CD8-positive, alpha-beta T cell (primary cell): ENCODE measurements at regions of chr3 and their contacts with region 1.

Region 1: GRCh38 chr3:143119009-143119914 is at the start of gene CHST2:
- DNase-seq: peak; percentile 28 to 85 (median 66)
- ATAC-seq: peak; percentile 74
- H3K4me3 ChIP-seq: peak within 1 kb of the TSS; percentile 88 to 90
- H3K4me3 Mint-ChIP-seq: peak within 1 kb of the TSS; percentile 88
- H3K27ac ChIP-seq: peak within 1 kb of the TSS; percentile 54 to 56
- H3K27ac Mint-ChIP-seq: peak within 1 kb of the TSS; percentile 75
- H3K4me1 ChIP-seq: peaks cover 37% of the 10 kb centered on the region
- H3K4me1 Mint-ChIP-seq: peaks cover 32% of the 10 kb centered on the region
- H3K27me3 ChIP-seq: no peaks in the 10 kb centered on the region
- H3K27me3 Mint-ChIP-seq: no peaks in the 10 kb centered on the region
- CTCF ChIP-seq: no peak
- total RNA-seq, gene CHST2: 2.5 to 2.7 TPM

Region 2: DNA sequence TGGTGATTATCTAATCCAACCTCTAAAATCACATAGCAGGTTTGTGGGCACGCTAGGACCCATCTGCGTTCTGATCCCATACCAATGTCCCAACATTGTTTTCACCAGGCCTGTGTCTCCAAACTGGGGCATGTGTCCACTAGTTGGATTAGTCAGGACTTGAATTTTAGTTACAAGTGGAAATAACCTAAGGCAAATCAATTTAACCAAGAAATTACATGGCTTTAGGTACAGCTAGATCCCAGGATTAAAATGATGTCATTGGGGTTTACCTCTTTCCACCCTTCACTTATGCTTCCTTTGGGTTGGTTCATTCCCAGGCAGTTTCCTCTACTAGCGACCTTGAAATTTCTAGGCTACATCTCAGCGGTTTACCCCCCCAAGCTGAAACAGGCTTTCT is 1934.8 kb before region 1 on chr3:
- CTCF ChIA-PET with region 1: no interaction called
- POLR2A ChIA-PET with region 1: no interaction called
- intact Hi-C with region 1: no loop called
- DNase-seq: no peak
- ATAC-seq: no peak
- H3K4me3 ChIP-seq: no peak overlapping the region
- H3K4me3 Mint-ChIP-seq: no peak overlapping the region
- H3K27ac ChIP-seq: no peak overlapping the region
- H3K27ac Mint-ChIP-seq: no peak overlapping the region
- H3K4me1 ChIP-seq: no peaks in the 10 kb centered on the region
- H3K4me1 Mint-ChIP-seq: no peaks in the 10 kb centered on the region
- H3K27me3 ChIP-seq: no peaks in the 10 kb centered on the region
- H3K27me3 Mint-ChIP-seq: no peaks in the 10 kb centered on the region
- CTCF ChIP-seq: no peak

Region 3: DNA sequence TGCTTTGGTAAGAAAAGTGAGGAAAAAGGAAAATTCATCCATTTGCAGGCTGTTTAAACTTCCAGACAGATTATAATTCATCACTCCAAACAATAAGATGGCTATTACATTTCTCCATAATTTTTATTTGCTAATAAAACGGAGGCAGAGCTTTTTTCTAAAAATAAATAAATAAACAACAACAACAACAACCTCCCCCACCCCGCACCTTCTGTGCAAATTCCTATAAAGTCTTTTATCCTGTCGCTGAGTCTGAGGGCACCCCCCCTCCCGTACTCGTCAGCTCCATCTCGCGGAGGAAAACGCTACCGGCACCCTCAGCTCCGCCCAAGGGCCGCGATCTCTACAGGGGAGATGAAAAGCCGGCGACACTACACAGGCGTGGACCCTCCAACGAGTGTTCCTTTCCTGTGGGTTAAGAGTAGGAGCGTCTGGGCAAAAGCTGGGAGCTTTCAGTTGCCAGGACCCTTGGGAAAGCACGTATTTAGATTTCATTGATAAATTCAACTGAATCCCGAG is 1243.8 kb before region 1 on chr3:
- CTCF ChIA-PET with region 1: no interaction called
- POLR2A ChIA-PET with region 1: no interaction called
- intact Hi-C with region 1: loop called in 1 of 2 experiments (anchors 5 kb)
- DNase-seq: peak; percentile 67 to 92 (median 84)
- ATAC-seq: peak; percentile 67
- H3K4me3 ChIP-seq: peak overlapping the region; percentile 71 to 88
- H3K4me3 Mint-ChIP-seq: peak overlapping the region; percentile 88
- H3K27ac ChIP-seq: peak overlapping the region; percentile 76 to 99
- H3K27ac Mint-ChIP-seq: peak overlapping the region; percentile 90
- H3K4me1 ChIP-seq: peaks cover 17% of the 10 kb centered on the region
- H3K4me1 Mint-ChIP-seq: peaks cover 29% of the 10 kb centered on the region
- H3K27me3 ChIP-seq: no peaks in the 10 kb centered on the region
- H3K27me3 Mint-ChIP-seq: no peaks in the 10 kb centered on the region
- CTCF ChIP-seq: peak; percentile 82

Region 4: DNA sequence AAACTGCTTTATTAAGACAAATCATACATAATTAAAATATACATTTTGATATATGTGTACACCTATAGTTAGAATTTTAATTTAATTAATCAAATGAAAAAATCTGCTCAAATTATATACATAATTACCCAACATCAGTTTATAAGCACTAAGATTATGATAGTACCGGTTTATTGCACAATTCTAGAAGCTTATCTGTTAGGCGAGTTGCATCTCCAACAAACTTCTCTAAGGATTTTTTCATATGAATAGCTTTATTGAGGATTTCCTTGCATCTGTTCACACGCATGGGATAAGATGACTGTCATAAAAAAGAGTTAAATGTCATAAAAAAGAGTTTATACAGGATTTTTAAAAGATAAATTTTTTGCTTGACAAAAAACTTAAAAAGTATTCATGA is 651.5 kb before region 1 on chr3:
- CTCF ChIA-PET with region 1: no interaction called
- POLR2A ChIA-PET with region 1: no interaction called
- intact Hi-C with region 1: no loop called
- DNase-seq: no peak
- ATAC-seq: no peak
- H3K4me3 ChIP-seq: no peak overlapping the region
- H3K4me3 Mint-ChIP-seq: no peak overlapping the region
- H3K27ac ChIP-seq: no peak overlapping the region
- H3K27ac Mint-ChIP-seq: no peak overlapping the region
- H3K4me1 ChIP-seq: no peaks in the 10 kb centered on the region
- H3K4me1 Mint-ChIP-seq: no peaks in the 10 kb centered on the region
- H3K27me3 ChIP-seq: no peaks in the 10 kb centered on the region
- H3K27me3 Mint-ChIP-seq: no peaks in the 10 kb centered on the region
- CTCF ChIP-seq: no peak

Region 5: GRCh38 chr3:142595951-142596725 is 523.1 kb before region 1 on chr3 and contains the start of gene PLS1:
- CTCF ChIA-PET with region 1: no interaction called
- POLR2A ChIA-PET with region 1: no interaction called
- intact Hi-C with region 1: loop called in 1 of 2 experiments (anchors 2 kb)
- DNase-seq: peak; percentile 74 to 91 (median 83)
- ATAC-seq: peak; percentile 87
- H3K4me3 ChIP-seq: peak within 1 kb of the TSS; percentile 75 to 84
- H3K4me3 Mint-ChIP-seq: peak within 1 kb of the TSS; percentile 96
- H3K27ac ChIP-seq: peak within 1 kb of the TSS; percentile 28 to 34
- H3K27ac Mint-ChIP-seq: peak within 1 kb of the TSS; percentile 89
- H3K4me1 ChIP-seq: peaks cover 17% of the 10 kb centered on the region
- H3K4me1 Mint-ChIP-seq: peaks cover 17% of the 10 kb centered on the region
- H3K27me3 ChIP-seq: no peaks in the 10 kb centered on the region
- H3K27me3 Mint-ChIP-seq: peaks cover 11% of the 10 kb centered on the region
- CTCF ChIP-seq: no peak
- total RNA-seq, gene PLS1: 0.57 to 2.0 TPM

Region 6: DNA sequence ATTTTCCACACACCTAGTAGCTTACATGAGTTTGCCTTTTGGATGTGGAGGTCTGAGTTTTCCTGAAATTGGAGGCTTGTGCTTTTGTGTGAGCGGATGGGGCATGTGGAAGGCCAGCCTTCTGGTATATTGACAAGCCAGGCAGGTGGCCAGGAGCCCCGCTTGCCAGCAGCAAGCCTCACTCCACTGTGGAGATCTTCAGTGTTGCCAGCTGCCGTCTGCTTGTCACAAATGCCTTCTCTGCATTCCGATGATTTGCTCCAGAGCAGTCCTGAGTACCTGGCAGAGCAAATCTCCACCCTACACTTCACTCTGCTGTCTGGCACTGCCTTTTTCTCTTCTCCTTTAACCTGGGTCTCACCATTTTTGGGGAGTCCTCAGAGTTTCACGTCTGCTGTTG is 28.8 kb before region 1 on chr3:
- CTCF ChIA-PET with region 1: no interaction called
- POLR2A ChIA-PET with region 1: no interaction called
- intact Hi-C with region 1: no loop called
- DNase-seq: no peak
- ATAC-seq: no peak
- H3K4me3 ChIP-seq: no peak overlapping the region
- H3K4me3 Mint-ChIP-seq: no peak overlapping the region
- H3K27ac ChIP-seq: no peak overlapping the region
- H3K27ac Mint-ChIP-seq: no peak overlapping the region
- H3K4me1 ChIP-seq: no peaks in the 10 kb centered on the region
- H3K4me1 Mint-ChIP-seq: no peaks in the 10 kb centered on the region
- H3K27me3 ChIP-seq: no peaks in the 10 kb centered on the region
- H3K27me3 Mint-ChIP-seq: no peaks in the 10 kb centered on the region
- CTCF ChIP-seq: no peak

Region 7: DNA sequence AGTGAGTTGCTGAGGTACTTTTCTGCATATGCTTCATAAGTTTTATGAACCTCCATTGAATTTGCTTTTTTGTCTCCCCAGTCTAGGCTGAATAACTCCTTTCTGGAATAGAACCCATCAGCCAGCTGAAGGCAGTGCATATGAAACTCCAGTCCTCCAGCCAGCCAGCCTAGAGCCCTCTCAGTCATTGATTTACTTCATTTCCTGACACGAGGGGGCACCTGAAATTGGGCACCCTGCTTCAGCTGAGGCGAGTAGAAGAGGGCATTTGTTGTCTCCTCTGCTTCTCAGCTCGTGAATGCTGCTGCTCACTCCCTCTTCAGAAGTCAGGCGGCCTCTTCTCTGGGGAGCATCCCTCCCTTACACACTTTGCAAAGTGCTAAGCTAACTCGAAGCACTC is 32.8 kb after region 1 on chr3:
- CTCF ChIA-PET with region 1: interaction called, 3 read pairs
- POLR2A ChIA-PET with region 1: no interaction called
- intact Hi-C with region 1: loop called in 1 of 2 experiments (anchors 2 kb)
- DNase-seq: peak in 3 of 9 experiments; percentile 10 to 34 (median 25)
- ATAC-seq: peak; percentile 48
- H3K4me3 ChIP-seq: no peak overlapping the region
- H3K4me3 Mint-ChIP-seq: no peak overlapping the region
- H3K27ac ChIP-seq: no peak overlapping the region
- H3K27ac Mint-ChIP-seq: no peak overlapping the region
- H3K4me1 ChIP-seq: peaks cover 12% of the 10 kb centered on the region
- H3K4me1 Mint-ChIP-seq: peaks cover 29% of the 10 kb centered on the region
- H3K27me3 ChIP-seq: no peaks in the 10 kb centered on the region
- H3K27me3 Mint-ChIP-seq: no peaks in the 10 kb centered on the region
- CTCF ChIP-seq: no peak

Region 8: DNA sequence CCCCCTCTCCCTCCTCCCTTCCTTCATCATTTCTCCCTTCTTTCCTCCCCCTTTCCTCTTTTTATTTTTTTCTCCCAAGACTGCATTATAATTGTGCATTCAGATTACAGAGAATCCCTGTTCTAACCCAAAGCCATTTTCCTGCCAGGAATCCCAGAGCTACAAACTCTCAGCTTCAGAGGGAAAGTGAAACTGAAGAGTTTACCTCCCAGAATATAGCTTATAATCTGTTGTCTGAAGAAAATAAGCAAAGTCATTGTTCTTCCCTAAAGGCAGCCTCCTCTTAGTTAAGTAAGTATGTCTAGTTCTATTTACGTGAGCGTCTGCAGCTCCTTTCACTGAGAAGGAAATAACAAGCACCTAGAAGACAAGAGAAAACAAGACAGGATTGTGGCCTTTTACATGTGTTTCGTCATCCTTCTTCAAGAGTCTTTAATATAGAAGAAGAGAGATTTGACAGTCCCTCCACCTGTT is 97.5 kb after region 1 on chr3:
- CTCF ChIA-PET with region 1: no interaction called
- POLR2A ChIA-PET with region 1: no interaction called
- intact Hi-C with region 1: no loop called
- DNase-seq: peak in 1 of 9 experiments; percentile 31
- ATAC-seq: peak; percentile 90
- H3K4me3 ChIP-seq: no peak overlapping the region
- H3K4me3 Mint-ChIP-seq: peak overlapping the region; percentile 79
- H3K27ac ChIP-seq: no peak overlapping the region
- H3K27ac Mint-ChIP-seq: peak overlapping the region; percentile 89
- H3K4me1 ChIP-seq: peaks cover 7% of the 10 kb centered on the region
- H3K4me1 Mint-ChIP-seq: peaks cover 24% of the 10 kb centered on the region
- H3K27me3 ChIP-seq: no peaks in the 10 kb centered on the region
- H3K27me3 Mint-ChIP-seq: no peaks in the 10 kb centered on the region
- CTCF ChIP-seq: no peak

Region 9: GRCh38 chr3:143302638-143303171 is 183.4 kb after region 1 on chr3:
- CTCF ChIA-PET with region 1: interaction called, 4 read pairs
- POLR2A ChIA-PET with region 1: no interaction called
- intact Hi-C with region 1: loop called in 1 of 2 experiments (anchors 2 kb)
- DNase-seq: no peak
- ATAC-seq: no peak
- H3K4me3 ChIP-seq: no peak overlapping the region
- H3K4me3 Mint-ChIP-seq: no peak overlapping the region
- H3K27ac ChIP-seq: no peak overlapping the region
- H3K27ac Mint-ChIP-seq: no peak overlapping the region
- H3K4me1 ChIP-seq: no peaks in the 10 kb centered on the region
- H3K4me1 Mint-ChIP-seq: peaks cover 13% of the 10 kb centered on the region
- H3K27me3 ChIP-seq: no peaks in the 10 kb centered on the region
- H3K27me3 Mint-ChIP-seq: no peaks in the 10 kb centered on the region
- CTCF ChIP-seq: no peak

Region 10: DNA sequence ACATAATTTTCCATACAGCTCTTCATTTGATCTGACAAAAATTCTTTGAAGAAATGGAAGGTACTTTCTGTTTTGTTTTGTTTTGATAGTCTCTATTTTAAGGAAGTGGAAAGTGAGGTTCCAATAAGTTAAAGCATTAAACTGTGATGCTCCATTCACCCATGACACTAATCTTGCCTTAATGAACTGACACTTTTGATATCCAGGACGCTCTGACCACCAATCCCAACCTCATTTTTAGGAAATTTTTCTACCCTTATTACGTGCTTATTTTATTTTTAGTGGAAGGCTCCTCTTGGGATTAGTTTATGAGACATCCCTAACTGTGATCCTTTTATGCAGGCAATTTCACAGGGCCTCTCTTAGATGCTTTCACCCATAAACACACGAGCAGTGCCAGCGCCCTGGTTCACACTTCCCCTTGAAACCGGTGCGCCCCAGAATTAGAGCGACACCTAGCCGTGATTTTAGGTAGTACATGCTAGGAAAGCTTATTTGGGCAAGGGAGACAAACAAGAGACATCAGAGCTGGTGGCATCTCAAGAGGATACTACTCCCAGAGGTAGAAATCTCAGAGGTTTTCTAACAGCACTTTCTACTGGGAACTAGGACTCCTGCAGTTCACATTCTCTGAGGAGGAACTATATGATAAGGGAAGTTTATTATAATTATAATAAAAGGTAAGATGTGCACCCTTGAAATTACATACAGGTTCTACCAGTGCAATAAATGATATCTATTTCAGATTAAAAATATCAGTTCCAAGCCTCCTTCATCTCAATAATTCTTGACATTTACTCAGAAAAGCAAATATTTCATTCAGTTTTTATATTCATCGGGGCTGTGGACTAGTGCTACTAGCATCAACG is 555.1 kb after region 1 on chr3:
- CTCF ChIA-PET with region 1: interaction called, 8 read pairs
- POLR2A ChIA-PET with region 1: no interaction called
- intact Hi-C with region 1: loop called (anchors 1 to 2 kb)
- DNase-seq: peak; percentile 54 to 81 (median 72)
- ATAC-seq: peak; percentile 97
- H3K4me3 ChIP-seq: no peak overlapping the region
- H3K4me3 Mint-ChIP-seq: peak overlapping the region; percentile 36
- H3K27ac ChIP-seq: no peak overlapping the region
- H3K27ac Mint-ChIP-seq: peak overlapping the region; percentile 60
- H3K4me1 ChIP-seq: peaks cover 4% of the 10 kb centered on the region
- H3K4me1 Mint-ChIP-seq: peaks cover 8% of the 10 kb centered on the region
- H3K27me3 ChIP-seq: no peaks in the 10 kb centered on the region
- H3K27me3 Mint-ChIP-seq: no peaks in the 10 kb centered on the region
- CTCF ChIP-seq: peak; percentile 90

Region 11: DNA sequence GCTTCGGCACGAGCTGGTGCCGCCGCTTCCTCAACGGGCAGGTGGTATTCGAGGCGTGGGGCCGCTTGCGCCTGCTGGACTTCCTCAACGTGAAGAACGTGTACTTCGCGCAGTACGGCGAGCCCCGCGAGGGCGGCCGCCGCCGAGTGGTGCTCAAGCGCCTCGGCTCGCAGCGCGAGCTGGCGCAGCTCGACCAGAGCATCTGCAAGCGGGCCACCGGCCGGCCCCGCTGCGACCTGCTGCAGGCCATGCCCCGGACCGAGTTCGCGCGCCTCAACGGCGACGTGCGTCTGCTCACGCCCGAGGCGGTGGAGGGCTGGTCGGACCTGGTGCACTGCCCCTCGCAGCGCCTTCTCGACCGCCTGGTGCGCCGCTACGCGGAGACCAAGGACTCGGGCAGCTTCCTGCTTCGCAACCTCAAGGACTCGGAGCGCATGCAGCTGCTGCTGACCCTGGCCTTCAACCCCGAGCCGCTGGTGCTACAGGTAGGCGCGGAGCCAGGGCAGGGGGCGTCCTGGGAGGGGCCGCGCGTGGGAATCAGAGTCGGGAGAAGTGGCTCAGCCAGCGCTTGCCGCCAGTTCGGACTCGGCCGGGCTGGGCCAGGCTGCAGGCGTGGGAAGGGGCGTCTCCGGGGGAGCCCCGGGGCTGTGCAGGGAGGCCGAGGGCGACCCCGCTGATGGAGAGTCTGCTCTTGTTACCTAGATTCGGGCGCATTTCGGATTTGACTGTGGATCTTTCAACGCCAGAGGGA is 853.4 kb after region 1 on chr3:
- CTCF ChIA-PET with region 1: interaction called, 3 read pairs
- POLR2A ChIA-PET with region 1: interaction called, 9 read pairs
- intact Hi-C with region 1: loop called in 1 of 2 experiments (anchors 5 kb)
- DNase-seq: peak; percentile 28 to 91 (median 52)
- ATAC-seq: no peak
- H3K4me3 ChIP-seq: peak overlapping the region; percentile 75 to 89
- H3K4me3 Mint-ChIP-seq: peak overlapping the region; percentile 95
- H3K27ac ChIP-seq: peak overlapping the region; percentile 69 to 82
- H3K27ac Mint-ChIP-seq: peak overlapping the region; percentile 93
- H3K4me1 ChIP-seq: peaks cover 34% of the 10 kb centered on the region
- H3K4me1 Mint-ChIP-seq: peaks cover 39% of the 10 kb centered on the region
- H3K27me3 ChIP-seq: no peaks in the 10 kb centered on the region
- H3K27me3 Mint-ChIP-seq: peaks cover 5% of the 10 kb centered on the region
- CTCF ChIP-seq: peak; percentile 51